PC-3 (cell line): ENCODE measurements at regions of chr3 and their contacts with region 1.

Region 1: DNA sequence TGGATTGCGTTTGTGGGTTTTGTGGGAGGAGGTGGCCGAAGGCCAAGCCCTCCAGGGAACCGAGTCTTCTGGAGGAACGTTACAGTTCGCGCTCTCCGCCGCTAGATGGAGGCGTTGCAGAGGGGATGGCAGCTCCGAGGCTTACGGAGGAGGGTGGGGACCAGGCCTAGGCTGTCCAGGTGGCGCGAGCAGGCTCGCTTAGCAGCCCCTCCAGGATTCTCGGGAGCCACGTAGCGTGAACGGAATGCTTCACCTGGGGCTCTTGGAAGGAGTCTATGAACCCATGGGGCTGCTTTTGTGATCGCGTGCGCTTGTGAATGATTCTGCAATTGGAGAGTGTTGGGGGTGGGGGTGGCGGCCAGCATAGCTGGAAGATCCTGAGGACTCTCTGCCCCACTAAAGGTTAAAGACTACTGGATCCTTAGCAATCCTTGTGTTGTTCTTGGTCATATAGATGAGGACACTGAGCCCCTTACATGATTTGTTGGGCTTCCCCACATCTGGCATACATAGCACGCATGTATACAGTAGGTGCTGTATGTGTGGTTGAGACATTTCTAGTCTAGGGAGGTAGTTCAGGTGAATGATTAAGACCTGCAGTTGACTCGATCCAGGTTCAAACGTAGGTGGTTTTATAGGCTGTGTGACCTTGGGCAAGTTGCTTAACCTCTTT is 25.7 kb downstream of the FAM3D start:
- DNase-seq: peak; percentile 92
- ATAC-seq: peak; percentile 94
- H3K4me3 ChIP-seq: no peak overlapping the region
- H3K27ac ChIP-seq: no peak overlapping the region
- H3K4me1 ChIP-seq: peaks cover 22% of the 10 kb centered on the region
- H3K27me3 ChIP-seq: no peaks in the 10 kb centered on the region
- CTCF ChIP-seq: peak; percentile 96

Region 2: DNA sequence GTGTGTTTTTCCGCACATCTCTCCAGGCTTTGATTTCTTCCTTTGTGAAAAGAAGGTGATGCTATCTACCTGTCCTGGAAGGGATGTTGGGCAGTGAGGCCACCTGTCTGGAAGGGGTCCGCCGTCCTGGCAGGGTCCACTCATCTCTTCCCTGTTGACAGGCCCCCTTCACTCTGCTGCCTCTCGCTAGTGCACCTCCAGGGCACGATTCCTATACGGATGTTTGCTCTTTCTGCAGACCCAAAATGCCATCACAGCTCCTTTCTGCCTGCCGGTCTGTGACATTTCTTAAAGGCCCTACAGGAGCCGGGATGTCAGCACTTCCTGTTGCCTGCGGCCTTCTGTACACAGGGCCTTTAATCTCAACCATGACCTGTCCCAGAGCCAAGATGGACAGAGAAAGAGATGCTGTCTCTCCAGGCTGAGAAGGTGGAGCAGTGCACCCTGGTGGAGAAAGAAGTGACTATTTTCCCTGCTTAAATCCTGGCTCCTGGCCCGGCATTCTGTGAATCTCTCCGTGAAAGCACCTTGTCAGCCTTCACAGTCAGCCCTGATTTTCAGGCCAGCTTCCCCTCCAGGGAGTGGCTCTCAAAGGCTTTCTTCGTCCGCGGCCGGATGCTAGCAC is 18.3 kb after region 1 on chr3:
- CTCF ChIA-PET with region 1: interaction called, 3 read pairs
- POLR2A ChIA-PET with region 1: no interaction called
- intact Hi-C with region 1: loop called (anchors 1 kb)
- DNase-seq: peak; percentile 68
- ATAC-seq: peak; percentile 80
- H3K4me3 ChIP-seq: no peak overlapping the region
- H3K27ac ChIP-seq: no peak overlapping the region
- H3K4me1 ChIP-seq: no peaks in the 10 kb centered on the region
- H3K27me3 ChIP-seq: 0 out of 2 replicates have a peak, but pooled peaks cover 5% of the 10 kb centered on the region
- CTCF ChIP-seq: peak; percentile 66

Region 3: GRCh38 chr3:58824285-58824684 is 183.4 kb after region 1 on chr3:
- CTCF ChIA-PET with region 1: interaction called, 5 read pairs
- POLR2A ChIA-PET with region 1: no interaction called
- intact Hi-C with region 1: loop called (anchors 2 kb)
- DNase-seq: peak; percentile 81
- ATAC-seq: peak; percentile 81
- H3K4me3 ChIP-seq: no peak overlapping the region
- H3K27ac ChIP-seq: no peak overlapping the region
- H3K4me1 ChIP-seq: no peaks in the 10 kb centered on the region
- H3K27me3 ChIP-seq: no peaks in the 10 kb centered on the region
- CTCF ChIP-seq: peak; percentile 97

Region 4: GRCh38 chr3:58899159-58899952 is 258.5 kb after region 1 on chr3:
- CTCF ChIA-PET with region 1: no interaction called
- POLR2A ChIA-PET with region 1: no interaction called
- intact Hi-C with region 1: no loop called
- DNase-seq: peak; percentile 47
- ATAC-seq: peak; percentile 40; the same call in 1 of the 2 replicates
- H3K4me3 ChIP-seq: no peak overlapping the region
- H3K27ac ChIP-seq: no peak overlapping the region
- H3K4me1 ChIP-seq: peaks cover 12% of the 10 kb centered on the region; the same call in 1 of the 2 replicates
- H3K27me3 ChIP-seq: no peaks in the 10 kb centered on the region
- CTCF ChIP-seq: no peak

Region 5: GRCh38 chr3:58989163-58989562 is 348.3 kb after region 1 on chr3:
- CTCF ChIA-PET with region 1: no interaction called
- POLR2A ChIA-PET with region 1: no interaction called
- intact Hi-C with region 1: loop called (anchors 2 kb)
- DNase-seq: peak; percentile 53
- ATAC-seq: peak; percentile 69
- H3K4me3 ChIP-seq: no peak overlapping the region
- H3K27ac ChIP-seq: no peak overlapping the region
- H3K4me1 ChIP-seq: peaks cover 19% of the 10 kb centered on the region
- H3K27me3 ChIP-seq: no peaks in the 10 kb centered on the region
- CTCF ChIP-seq: no peak